Activated CD4-positive, alpha-beta T cell treated with anti-CD3 and anti-CD28 coated beads, Interleukin-2, amount 10 ng/mL, durations not matched to agents 24 days and 14 days (primary cell): ENCODE measurements at regions of chr17 and their contacts with region 1.

Region 1: DNA sequence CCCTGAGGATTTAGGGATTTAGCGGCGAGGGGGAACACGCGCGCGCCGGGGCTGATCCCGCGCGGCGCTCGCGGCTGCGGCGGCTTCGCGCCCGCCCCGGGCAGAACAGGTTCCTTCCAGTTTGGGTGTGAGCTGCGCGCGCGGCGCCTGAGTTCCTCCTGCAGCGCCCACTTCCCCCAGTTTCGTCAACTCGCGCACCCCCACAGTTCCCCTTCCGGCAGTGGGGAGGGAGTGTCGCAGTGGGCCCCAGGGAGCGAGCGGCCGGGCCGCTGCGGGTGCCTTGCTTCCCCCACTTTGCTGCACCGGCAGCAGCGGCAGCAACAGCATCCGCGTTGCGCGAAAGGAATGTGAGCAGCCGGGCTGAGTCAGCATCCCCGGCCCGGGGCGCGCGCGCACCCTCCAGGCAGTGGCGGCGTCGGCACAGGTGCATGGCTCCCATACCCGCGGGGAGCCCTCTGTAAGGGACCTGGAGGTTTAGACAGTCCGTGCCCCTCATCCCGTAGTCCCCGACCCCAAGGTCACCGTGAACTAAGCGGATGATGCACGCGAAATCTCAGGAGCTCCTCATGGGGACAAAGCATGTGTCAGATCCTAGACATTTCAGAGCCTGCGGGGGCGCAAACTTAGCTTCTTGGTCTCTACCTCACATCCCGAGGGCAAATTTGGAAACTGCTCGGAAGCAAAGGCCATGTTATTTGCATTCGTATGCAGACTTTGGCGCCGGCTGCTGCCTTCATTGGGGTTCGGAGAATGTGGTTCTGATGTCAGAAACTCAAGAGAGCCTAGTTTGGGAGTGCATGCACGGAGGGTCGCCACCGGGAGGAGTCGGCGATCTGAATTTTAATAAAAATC is 775 bp downstream of the ARSG start:
- DNase-seq: peak; percentile 97
- H3K4me3 Mint-ChIP-seq: peak overlapping the region; percentile 98
- H3K27ac Mint-ChIP-seq: peak overlapping the region; percentile 92
- H3K4me1 Mint-ChIP-seq: peaks cover 55% of the 10 kb centered on the region
- H3K27me3 Mint-ChIP-seq: peaks cover 2% of the 10 kb centered on the region

Region 2: GRCh38 chr17:68019675-68020408 is 272.2 kb before region 1 on chr17:
- intact Hi-C with region 1: loop called (anchors 5 kb)
- DNase-seq: peak; percentile 99
- H3K4me3 Mint-ChIP-seq: peak overlapping the region; percentile 82
- H3K27ac Mint-ChIP-seq: peak overlapping the region; percentile 90
- H3K4me1 Mint-ChIP-seq: peaks cover 14% of the 10 kb centered on the region
- H3K27me3 Mint-ChIP-seq: peaks cover 9% of the 10 kb centered on the region

Region 3: DNA sequence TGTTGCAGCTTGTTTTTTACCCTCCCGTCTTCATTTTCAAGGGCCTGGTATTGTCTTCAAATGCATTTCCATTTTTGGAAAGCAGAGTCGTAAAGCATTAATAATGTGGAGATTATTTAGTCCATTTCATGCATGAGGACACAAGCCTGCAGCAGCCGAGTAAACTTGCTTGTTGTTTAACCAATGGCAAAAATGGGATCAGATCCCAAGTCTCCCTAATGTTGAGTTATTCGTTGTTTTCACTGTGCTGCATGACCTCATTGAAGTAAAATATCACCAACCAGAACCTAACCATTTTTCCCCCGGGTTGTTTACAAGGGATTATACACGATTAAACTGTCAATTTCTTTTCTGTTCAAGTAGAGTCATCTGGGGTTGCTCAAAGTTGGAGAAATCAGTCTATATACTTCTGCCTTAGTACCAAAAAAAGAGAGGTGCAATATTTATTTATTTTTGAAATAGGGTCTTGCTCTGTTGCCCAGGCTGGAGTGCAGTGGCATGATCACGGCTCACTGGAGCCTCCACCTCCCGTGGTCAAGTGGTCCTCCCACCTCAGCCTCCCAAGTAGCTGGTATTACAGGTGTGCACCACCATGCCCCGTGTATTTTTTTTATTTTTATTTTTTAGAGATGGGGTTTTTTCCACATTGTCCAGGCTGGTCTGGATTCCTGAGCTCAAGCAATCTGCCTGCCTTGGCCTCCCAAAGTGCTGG is 31.9 kb before region 1 on chr17:
- intact Hi-C with region 1: loop called (anchors 2 kb)
- DNase-seq: no peak
- H3K4me3 Mint-ChIP-seq: peak overlapping the region; percentile 79
- H3K27ac Mint-ChIP-seq: peak overlapping the region; percentile 86
- H3K4me1 Mint-ChIP-seq: peaks cover 56% of the 10 kb centered on the region
- H3K27me3 Mint-ChIP-seq: no peaks in the 10 kb centered on the region

Region 4: GRCh38 chr17:68346448-68346847 is 54.4 kb after region 1 on chr17:
- intact Hi-C with region 1: loop called (anchors 2 kb)
- DNase-seq: peak; percentile 89
- H3K4me3 Mint-ChIP-seq: peak overlapping the region; percentile 81
- H3K27ac Mint-ChIP-seq: peak overlapping the region; percentile 94
- H3K4me1 Mint-ChIP-seq: peaks cover 62% of the 10 kb centered on the region
- H3K27me3 Mint-ChIP-seq: no peaks in the 10 kb centered on the region

Region 5: GRCh38 chr17:68399638-68400403 is 107.8 kb after region 1 on chr17:
- intact Hi-C with region 1: loop called (anchors 2 kb)
- DNase-seq: peak; percentile 80
- H3K4me3 Mint-ChIP-seq: peak overlapping the region; percentile 62
- H3K27ac Mint-ChIP-seq: peak overlapping the region; percentile 88
- H3K4me1 Mint-ChIP-seq: peaks cover 33% of the 10 kb centered on the region
- H3K27me3 Mint-ChIP-seq: no peaks in the 10 kb centered on the region

Region 6: DNA sequence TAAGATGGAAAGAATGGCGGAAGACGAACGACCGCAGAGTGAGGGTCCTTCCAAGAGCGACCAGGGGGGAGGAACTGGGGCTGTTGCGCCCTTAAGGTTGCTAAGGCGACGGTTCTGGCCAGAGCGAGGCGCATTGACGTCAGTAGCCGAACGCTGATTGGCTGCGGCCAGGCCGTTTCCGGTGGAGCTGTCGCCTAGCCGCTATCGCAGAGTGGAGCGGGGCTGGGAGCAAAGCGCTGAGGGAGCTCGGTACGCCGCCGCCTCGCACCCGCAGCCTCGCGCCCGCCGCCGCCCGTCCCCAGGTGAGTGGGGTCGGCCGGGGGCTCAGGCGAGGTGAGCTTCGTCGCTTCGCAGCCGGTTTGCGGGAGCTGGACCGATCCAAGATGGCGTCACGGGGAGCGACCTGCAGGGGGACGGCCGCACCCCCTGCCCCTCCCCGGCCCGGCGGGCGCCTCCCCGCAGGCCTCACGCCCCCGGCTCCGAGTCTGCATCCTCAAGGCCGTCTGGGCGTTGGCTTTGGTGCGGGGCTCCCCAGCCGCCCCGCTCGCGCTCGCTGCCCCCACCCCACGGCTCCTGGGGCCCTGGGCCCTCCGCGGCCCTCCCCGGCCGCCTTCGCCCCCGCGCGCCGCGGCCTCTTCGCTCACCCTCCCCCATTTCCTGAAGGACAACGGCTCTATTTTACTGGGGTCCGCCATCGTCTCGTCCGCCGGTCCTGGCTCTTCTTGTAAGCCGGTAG is 220.3 kb after region 1 on chr17 and contains the start of gene PRKAR1A:
- intact Hi-C with region 1: loop called (anchors 5 kb)
- DNase-seq: peak; percentile 98
- H3K4me3 Mint-ChIP-seq: peak within 1 kb of the TSS; percentile 99
- H3K27ac Mint-ChIP-seq: peak within 1 kb of the TSS; percentile 99
- H3K4me1 Mint-ChIP-seq: peaks cover 61% of the 10 kb centered on the region
- H3K27me3 Mint-ChIP-seq: no peaks in the 10 kb centered on the region
- total RNA-seq, gene PRKAR1A: 194 and 207 TPM in 2 replicates